ENCODE measurements at regions of chr3 and their contacts with region 1.

Region 1: DNA sequence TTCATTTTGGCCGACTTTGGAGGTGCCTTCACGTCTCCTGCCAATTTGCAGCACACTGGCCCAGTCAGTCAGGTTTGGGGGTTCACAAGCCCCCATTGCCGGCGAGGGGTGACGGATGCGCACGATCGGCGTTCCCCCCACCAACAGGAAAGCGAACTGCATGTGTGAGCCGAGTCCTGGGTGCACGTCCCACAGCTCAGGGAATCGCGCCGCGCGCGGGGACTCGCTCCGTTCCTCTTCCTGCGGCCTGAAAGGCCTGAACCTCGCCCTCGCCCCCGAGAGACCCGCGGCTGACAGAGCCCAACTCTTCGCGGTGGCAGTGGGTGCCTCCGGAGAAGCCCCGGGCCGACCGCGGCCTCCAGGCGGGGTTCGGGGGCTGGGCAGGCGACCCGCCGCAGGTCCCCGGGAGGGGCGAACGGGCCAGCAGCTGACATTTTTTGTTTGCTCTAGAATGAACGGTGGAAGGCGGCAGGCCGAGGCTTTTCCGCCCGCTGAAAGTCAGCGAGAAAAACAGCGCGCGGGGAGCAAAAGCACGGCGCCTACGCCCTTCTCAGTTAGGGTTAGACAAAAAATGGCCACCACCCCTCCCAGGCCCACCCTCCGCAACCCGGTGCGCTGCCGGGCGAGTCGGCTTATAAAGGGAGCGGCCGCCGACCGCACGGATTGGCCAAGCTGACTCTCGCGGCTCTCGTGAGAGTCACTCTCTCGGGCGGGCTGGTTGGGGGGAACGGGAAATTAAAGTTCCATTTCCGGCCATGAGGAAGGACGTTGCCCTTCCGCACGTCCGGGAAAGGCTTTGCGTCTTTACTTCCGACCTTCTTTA is at the start of gene TERC:
- DNase-seq: peak; percentile 93 to 95
- H3K4me3 ChIP-seq: peak within 1 kb of the TSS; percentile 72
- H3K4me3 Mint-ChIP-seq: peak within 1 kb of the TSS; percentile 84
- H3K27ac Mint-ChIP-seq: peak within 1 kb of the TSS; percentile 89
- H3K4me1 ChIP-seq: no peaks in the 10 kb centered on the region
- H3K4me1 Mint-ChIP-seq: no peaks in the 10 kb centered on the region
- H3K27me3 ChIP-seq: no peaks in the 10 kb centered on the region
- H3K27me3 Mint-ChIP-seq: no peaks in the 10 kb centered on the region
- CTCF ChIP-seq: no peak
- total RNA-seq, gene TERC: 17.1 and 19.0 TPM in 2 replicates

Region 2: DNA sequence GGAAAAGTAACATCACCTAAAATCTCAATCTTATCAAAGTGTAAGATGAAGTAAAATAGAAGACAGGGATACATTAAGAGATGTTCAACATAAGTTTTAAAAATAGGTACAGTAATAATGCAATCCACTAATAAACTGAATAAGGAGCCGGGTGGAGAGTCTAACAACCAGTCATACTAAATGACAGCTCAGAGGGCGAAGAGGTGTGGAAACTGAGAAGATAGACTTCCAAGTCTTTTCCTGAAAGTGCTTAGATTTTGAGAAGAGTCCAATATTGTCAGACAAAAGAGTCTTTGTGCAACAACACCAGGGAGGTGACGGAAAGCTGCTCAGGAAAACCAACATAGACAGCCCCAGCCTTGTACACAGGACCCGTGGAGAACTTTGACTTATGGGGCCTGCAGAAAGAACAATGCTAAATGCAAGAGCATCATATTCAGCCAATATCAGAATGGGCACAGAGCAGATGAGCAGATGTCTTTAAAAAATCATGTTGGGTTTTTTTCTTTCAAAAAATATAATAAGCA is 167.5 kb before region 1 on chr3:
- CTCF ChIA-PET with region 1: no interaction called
- POLR2A ChIA-PET with region 1: no interaction called
- intact Hi-C with region 1: no loop called
- DNase-seq: no peak
- H3K4me3 ChIP-seq: no peak overlapping the region
- H3K4me3 Mint-ChIP-seq: no peak overlapping the region
- H3K27ac Mint-ChIP-seq: no peak overlapping the region
- H3K4me1 ChIP-seq: no peaks in the 10 kb centered on the region
- H3K4me1 Mint-ChIP-seq: peaks cover 5% of the 10 kb centered on the region
- H3K27me3 ChIP-seq: no peaks in the 10 kb centered on the region
- H3K27me3 Mint-ChIP-seq: no peaks in the 10 kb centered on the region
- CTCF ChIP-seq: no peak

Region 3: DNA sequence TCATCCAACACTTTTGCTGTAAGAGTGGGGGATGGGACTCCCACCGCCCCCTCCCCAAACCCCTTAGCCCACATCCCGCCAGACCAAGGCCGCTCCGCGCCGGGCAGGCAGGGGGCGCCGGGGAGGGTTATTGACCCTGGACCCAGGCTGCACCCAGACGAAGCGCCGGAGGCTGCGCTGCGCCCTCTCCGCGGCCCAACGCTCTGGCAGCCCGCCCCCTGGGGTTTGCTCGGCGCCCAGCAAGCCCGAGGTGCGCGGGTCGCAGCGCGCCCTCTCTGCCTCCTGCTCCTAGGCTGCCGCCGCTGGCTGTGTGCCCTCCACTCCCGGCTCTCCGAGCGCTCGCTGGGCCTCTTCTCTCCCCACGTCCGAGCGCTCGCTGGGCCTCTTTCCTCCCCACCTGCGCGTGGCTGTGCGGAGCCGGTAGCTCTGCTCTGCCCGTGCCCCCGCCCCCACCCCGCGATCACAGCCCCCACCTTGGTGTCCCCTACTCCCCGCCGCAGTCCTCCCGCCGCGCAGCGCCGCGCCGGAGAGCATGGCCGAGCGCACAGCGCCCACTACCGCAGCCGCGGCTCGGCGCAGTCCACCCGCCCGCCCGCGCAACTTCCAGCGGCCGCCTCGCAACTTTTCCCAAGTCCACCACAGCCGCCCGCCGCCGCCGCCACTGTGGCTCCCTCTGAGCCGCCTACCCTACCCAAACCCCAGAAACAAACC is 102.4 kb before region 1 on chr3:
- CTCF ChIA-PET with region 1: no interaction called
- POLR2A ChIA-PET with region 1: interaction called, 10 read pairs
- intact Hi-C with region 1: no loop called
- DNase-seq: peak; percentile 83 to 92
- H3K4me3 ChIP-seq: peak overlapping the region; percentile 54
- H3K4me3 Mint-ChIP-seq: peak overlapping the region; percentile 87
- H3K27ac Mint-ChIP-seq: no peak overlapping the region
- H3K4me1 ChIP-seq: peaks cover 3% of the 10 kb centered on the region; the same call in 1 of the 2 replicates
- H3K4me1 Mint-ChIP-seq: no peaks in the 10 kb centered on the region
- H3K27me3 ChIP-seq: peaks cover 3% of the 10 kb centered on the region
- H3K27me3 Mint-ChIP-seq: peaks cover 11% of the 10 kb centered on the region
- CTCF ChIP-seq: peak; percentile 73 to 77

Region 4: DNA sequence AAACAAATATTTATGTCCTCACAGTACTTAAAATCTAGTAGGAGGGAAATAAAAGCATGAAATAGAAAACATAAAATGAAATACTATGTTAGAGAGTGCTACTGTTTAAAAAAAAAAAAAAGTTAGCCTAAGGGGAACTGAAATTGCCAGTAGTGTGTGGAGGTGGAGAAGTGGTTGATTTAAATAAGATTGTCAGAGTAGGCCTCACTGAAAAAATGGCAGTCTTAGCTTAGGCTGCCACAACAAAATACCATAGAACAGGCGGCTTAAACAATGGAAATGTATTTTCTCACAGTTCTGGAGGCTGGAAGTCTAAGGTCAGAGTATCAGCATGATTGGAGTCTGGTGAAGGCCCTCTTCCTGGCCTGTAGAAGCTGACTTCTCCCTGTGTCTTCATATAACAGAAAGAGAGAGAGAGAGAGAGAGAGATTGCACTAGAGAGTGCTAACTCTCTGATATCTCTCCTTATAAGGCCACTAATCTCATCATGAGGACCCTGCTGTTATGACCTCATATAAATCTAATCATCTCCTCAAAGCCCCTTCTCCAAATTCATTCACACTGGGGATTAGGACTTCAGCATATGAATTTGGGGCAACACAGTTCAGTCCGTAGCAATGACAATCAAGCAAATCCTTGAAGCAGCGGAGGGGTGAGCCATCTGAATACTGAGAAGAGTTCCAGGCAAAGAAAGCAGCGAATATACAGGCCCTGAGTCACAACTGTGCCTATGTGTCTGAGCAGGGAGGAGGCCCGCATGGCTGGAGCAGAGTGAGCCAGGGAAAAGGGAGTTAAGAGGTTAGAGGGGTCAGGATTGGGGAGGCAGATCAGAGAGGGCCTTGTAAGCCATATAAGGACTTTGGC is 71.6 kb after region 1 on chr3:
- CTCF ChIA-PET with region 1: no interaction called
- POLR2A ChIA-PET with region 1: no interaction called
- intact Hi-C with region 1: no loop called
- DNase-seq: no peak
- H3K4me3 ChIP-seq: no peak overlapping the region
- H3K4me3 Mint-ChIP-seq: no peak overlapping the region
- H3K27ac Mint-ChIP-seq: no peak overlapping the region
- H3K4me1 ChIP-seq: no peaks in the 10 kb centered on the region
- H3K4me1 Mint-ChIP-seq: no peaks in the 10 kb centered on the region
- H3K27me3 ChIP-seq: no peaks in the 10 kb centered on the region
- H3K27me3 Mint-ChIP-seq: peaks cover 14% of the 10 kb centered on the region
- CTCF ChIP-seq: no peak

Region 5: DNA sequence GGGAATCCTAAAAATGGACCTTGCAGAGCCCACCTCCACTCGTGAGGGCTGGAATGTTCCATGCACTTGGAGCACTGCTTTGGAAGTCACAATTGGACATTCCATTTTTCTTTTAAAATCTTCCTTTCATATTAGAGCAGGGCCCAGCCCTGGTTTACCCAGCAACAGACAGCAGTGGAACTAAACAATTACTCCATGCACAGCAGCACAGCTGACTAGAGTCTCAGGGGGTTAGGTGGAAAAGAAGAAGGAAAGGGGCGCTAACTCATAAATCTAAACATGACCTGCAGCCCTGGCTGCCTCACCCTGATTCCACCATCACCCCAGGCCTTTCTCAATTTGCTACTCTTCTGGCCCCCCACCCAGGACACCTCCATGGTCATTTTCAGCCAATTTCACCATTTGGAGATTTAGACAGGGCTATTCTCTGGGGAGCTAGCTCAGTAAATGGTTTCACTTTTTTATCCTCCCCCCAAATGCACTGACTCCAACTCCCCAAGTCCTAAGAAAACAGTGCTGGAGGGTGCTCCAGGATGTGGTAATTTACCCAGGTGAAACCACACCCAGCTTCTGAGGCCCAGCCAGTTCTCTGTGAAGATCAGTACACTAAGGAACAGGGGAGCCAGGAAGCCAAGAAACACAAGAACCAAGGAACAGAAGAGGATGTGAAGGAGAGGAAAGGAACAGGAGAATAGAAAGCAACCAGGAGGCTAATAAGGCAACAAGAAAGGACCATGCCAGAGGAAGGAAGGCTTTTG is 106.6 kb after region 1 on chr3:
- CTCF ChIA-PET with region 1: no interaction called
- POLR2A ChIA-PET with region 1: no interaction called
- intact Hi-C with region 1: no loop called
- DNase-seq: no peak
- H3K4me3 ChIP-seq: no peak overlapping the region
- H3K4me3 Mint-ChIP-seq: no peak overlapping the region
- H3K27ac Mint-ChIP-seq: no peak overlapping the region
- H3K4me1 ChIP-seq: peaks cover 5% of the 10 kb centered on the region; the same call in 1 of the 2 replicates
- H3K4me1 Mint-ChIP-seq: peaks cover 10% of the 10 kb centered on the region
- H3K27me3 ChIP-seq: no peaks in the 10 kb centered on the region
- H3K27me3 Mint-ChIP-seq: no peaks in the 10 kb centered on the region
- CTCF ChIP-seq: no peak

Region 6: GRCh38 chr3:170078620-170079281 is 314.1 kb after region 1 on chr3:
- CTCF ChIA-PET with region 1: no interaction called
- POLR2A ChIA-PET with region 1: no interaction called
- intact Hi-C with region 1: no loop called
- DNase-seq: peak; percentile 42 to 59
- H3K4me3 ChIP-seq: no peak overlapping the region
- H3K4me3 Mint-ChIP-seq: no peak overlapping the region
- H3K27ac Mint-ChIP-seq: no peak overlapping the region
- H3K4me1 ChIP-seq: peaks cover 44% of the 10 kb centered on the region
- H3K4me1 Mint-ChIP-seq: peaks cover 22% of the 10 kb centered on the region
- H3K27me3 ChIP-seq: no peaks in the 10 kb centered on the region
- H3K27me3 Mint-ChIP-seq: no peaks in the 10 kb centered on the region
- CTCF ChIP-seq: no peak